ENCODE measurements at regions of chr11 and their contacts with region 1.

Region 1: DNA sequence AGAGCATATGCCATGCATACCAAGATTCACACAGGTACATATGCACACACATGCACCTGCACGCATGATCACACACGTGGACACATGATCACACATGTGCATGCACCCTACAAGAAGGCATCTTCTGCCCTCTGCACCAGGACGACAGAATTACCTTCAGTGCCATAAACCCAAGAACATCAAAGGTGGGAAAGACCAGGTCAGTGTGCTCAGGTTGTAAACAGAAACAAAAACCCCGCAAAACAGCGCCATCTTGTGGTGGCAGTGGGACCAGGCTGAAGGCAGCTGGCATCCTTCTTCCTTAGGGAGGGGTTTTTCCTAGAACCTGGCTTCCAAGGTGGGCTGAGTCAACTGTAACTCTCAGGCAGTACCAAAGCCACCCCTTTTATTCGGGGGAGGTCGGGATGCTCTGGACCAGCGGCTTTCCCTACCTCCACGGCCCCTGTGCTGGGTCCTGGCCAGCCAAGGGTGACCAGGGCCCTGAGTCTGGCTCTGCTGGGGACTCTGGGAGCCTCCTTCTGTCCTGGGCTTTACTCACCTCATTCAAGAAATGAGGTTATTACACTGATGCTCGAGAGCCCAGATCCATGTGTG is 69.4 kb upstream of the FGF3 start:
- DNase-seq: peak; percentile 86
- H3K4me3 Mint-ChIP-seq: no peak overlapping the region
- H3K27ac Mint-ChIP-seq: no peak overlapping the region
- H3K4me1 Mint-ChIP-seq: peaks cover 21% of the 10 kb centered on the region
- H3K27me3 Mint-ChIP-seq: peaks cover 14% of the 10 kb centered on the region
- CTCF ChIP-seq: peak; percentile 81

Region 2: DNA sequence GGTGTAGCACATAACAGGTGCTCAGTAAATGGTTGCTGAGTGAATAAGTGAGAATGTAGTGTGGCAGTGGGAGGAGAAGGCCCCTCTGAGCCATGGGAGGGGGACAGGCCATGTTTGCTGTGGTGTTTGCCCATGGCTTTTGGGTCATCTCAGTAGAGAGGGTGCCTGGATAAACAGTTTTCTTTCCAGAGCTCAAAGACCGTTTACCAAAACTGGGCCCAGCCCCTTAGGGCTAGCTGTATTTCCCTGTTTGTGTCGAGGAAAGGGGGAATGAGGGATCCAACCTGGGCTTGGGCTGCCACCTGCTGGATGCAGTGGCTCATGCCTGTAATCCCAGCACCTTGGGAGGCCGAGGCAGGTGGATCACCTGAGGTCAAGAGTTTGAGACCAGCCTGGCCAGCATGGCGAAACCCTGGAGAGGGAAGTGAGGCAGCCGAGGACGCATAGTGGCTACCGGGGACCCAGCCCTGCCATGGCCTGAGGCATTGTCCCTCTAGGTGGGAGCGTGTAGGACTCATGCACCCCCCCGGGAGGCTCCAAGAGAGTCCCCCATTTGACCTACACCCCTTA is 204.7 kb before region 1 on chr11:
- CTCF ChIA-PET with region 1: interaction called, 3 read pairs
- intact Hi-C with region 1: loop called (anchors 1 kb)
- DNase-seq: peak; percentile 78
- H3K4me3 Mint-ChIP-seq: no peak overlapping the region
- H3K27ac Mint-ChIP-seq: no peak overlapping the region
- H3K4me1 Mint-ChIP-seq: peaks cover 18% of the 10 kb centered on the region
- H3K27me3 Mint-ChIP-seq: no peaks in the 10 kb centered on the region
- CTCF ChIP-seq: peak; percentile 69

Region 3: DNA sequence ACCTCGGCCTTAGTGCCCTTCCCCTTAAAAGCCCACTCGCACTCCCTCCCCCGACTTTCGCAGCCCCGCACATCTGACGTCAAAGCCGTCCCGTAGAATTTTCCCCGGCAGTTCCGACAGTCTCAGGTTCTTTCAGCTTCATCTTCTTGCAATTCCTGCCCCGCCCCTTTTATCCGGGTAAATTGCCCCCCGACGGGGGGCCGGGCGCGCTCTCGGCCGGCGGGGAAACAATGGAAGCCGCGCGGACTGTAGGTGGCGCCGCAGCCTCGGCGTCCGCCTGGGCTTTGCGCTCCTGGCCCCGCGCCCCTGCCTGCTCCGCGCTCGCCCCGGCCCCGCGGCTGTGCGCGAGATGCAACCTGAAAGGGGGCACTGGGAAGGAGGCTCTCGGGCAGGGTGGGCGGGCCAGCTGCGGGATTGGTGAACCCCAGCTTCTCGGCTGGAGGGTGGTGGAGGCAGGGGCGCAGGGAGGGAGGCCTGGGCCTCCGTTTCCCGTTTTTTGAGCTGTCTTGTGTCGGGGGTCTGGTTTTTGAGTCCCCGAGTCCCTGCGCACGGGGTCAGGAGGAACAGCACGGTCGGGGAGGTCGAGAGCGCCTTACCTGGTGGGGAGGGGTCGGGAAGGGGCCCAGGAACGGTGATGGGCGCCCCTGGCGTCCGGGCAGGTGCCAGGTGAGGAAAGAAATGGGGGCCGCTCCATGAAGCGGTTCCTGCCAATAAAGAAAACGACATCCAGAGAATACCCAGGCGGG is 183.9 kb before region 1 on chr11:
- CTCF ChIA-PET with region 1: interaction called, 6 read pairs
- intact Hi-C with region 1: loop called (anchors 5 kb)
- DNase-seq: peak; percentile 30
- H3K4me3 Mint-ChIP-seq: peak overlapping the region; percentile 49
- H3K27ac Mint-ChIP-seq: no peak overlapping the region
- H3K4me1 Mint-ChIP-seq: peaks cover 12% of the 10 kb centered on the region
- H3K27me3 Mint-ChIP-seq: peaks cover 43% of the 10 kb centered on the region
- CTCF ChIP-seq: peak; percentile 13

Region 4: GRCh38 chr11:69721745-69722144 is 166.8 kb before region 1 on chr11:
- CTCF ChIA-PET with region 1: no interaction called
- intact Hi-C with region 1: loop called (anchors 5 kb)
- DNase-seq: peak; percentile 48
- H3K4me3 Mint-ChIP-seq: no peak overlapping the region
- H3K27ac Mint-ChIP-seq: no peak overlapping the region
- H3K4me1 Mint-ChIP-seq: no peaks in the 10 kb centered on the region
- H3K27me3 Mint-ChIP-seq: peaks cover 53% of the 10 kb centered on the region
- CTCF ChIP-seq: no peak

Region 5: GRCh38 chr11:69899957-69900821 is 11.6 kb after region 1 on chr11:
- CTCF ChIA-PET with region 1: interaction called, 15 read pairs
- intact Hi-C with region 1: no loop called
- DNase-seq: peak; percentile 85
- H3K4me3 Mint-ChIP-seq: peak overlapping the region; percentile 29
- H3K27ac Mint-ChIP-seq: peak overlapping the region; percentile 77
- H3K4me1 Mint-ChIP-seq: peaks cover 42% of the 10 kb centered on the region
- H3K27me3 Mint-ChIP-seq: no peaks in the 10 kb centered on the region
- CTCF ChIP-seq: no peak

Measured in Calu3 (cell line).